ENCODE measurements at regions of chr10 and their contacts with region 1.

Region 1: DNA sequence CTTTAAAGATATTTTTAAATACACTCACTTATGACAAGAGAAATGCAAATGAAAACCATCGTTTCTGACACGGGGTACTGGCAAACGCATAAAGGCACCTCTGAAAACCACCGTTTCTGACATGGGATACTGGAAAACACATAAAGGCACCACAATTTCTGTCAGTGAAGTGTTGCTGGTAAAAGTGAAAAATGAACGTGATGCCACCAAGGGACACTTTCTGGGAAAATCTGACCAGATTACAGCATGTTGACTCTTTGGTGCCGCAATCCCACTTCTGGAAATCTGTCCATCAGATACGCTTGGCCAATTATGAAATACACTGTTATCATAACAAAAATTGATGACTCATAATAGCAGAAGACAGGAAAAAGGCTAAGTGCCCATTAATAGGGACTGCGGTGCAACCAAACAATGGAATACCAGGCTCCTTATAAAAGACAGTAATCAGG is 131.7 kb downstream of the ZMYND11 start:
- DNase-seq: peak; percentile 73
- H3K4me3 ChIP-seq: no peak overlapping the region
- H3K27ac ChIP-seq: no peak overlapping the region
- H3K4me1 ChIP-seq: peaks cover 10% of the 10 kb centered on the region
- H3K27me3 ChIP-seq: no peaks in the 10 kb centered on the region
- CTCF ChIP-seq: no peak
- POLR2A ChIP-seq: no peak

Region 2: DNA sequence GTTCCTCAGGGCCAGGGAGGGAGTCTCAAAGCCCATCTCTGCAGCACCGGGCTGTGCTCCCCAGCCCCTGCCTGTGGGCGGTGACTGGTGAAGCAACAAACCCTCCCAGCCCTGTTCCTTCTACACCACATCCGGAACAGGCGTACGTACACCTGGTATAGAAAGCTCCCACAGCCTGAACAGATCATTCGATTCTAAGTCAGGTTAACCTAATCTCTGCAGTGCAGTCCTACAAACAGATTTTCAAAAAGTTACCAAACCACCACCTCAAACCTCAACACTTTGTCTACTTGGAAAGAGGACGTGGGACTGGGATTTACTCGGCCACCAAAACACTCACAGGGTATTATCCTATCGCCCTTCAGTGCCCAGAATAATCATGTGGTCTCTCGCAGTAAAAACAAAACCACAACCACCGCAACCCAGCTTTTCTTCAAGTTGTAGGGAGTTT is 184.0 kb after region 1 on chr10:
- CTCF ChIA-PET with region 1: no interaction called
- POLR2A ChIA-PET with region 1: no interaction called
- dilution Hi-C with region 1: no loop called
- intact Hi-C with region 1: loop called (anchors 10 kb)
- DNase-seq: no peak
- H3K4me3 ChIP-seq: no peak overlapping the region
- H3K27ac ChIP-seq: no peak overlapping the region
- H3K4me1 ChIP-seq: peaks cover 3% of the 10 kb centered on the region
- H3K27me3 ChIP-seq: no peaks in the 10 kb centered on the region
- CTCF ChIP-seq: no peak
- POLR2A ChIP-seq: no peak